ENCODE measurements at regions of chr10 and their contacts with region 1.

Region 1: DNA sequence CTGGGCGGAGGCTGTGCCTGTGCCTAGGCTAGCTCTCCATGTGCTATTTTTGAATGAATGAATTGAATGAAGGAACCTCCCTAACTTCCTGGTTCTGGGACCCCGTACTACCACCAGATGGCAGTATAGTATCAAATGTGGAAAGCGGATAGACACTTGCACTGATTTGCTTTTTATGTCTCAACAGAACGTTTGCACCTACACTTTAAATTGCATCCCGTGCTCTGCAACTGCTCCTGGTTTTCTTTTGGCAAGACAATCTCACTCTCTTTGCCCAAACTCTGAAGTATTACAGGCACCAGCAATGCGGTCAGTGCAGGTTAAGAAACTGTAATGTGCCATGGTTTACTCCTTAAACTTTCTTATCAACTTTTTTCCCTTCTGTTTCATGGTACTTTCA is 6.5 kb downstream of the FZD8 start:
- DNase-seq: no peak
- ATAC-seq: peak; percentile 60 to 83
- H3K4me3 ChIP-seq: no peak overlapping the region
- H3K27ac ChIP-seq: no peak overlapping the region
- H3K4me1 ChIP-seq: peaks cover 0 to 9% of the 10 kb centered on the region in 2 donors
- H3K27me3 ChIP-seq: no peaks in the 10 kb centered on the region
- CTCF ChIP-seq: peak; percentile 80 to 93 (median 84)
- POLR2A ChIP-seq: no peak

Region 2: GRCh38 chr10:36779234-36779846 is 1143.8 kb after region 1 on chr10:
- in situ Hi-C with region 1: loop called (anchors 5 to 10 kb)
- intact Hi-C with region 1: loop called (anchors 1 kb)
- DNase-seq: no peak
- ATAC-seq: peak in 1 of 2 donors; percentile 70
- H3K4me3 ChIP-seq: no peak overlapping the region
- H3K27ac ChIP-seq: no peak overlapping the region
- H3K4me1 ChIP-seq: no peaks in the 10 kb centered on the region
- H3K27me3 ChIP-seq: no peaks in the 10 kb centered on the region
- CTCF ChIP-seq: peak; percentile 27 to 62 (median 53)
- POLR2A ChIP-seq: no peak

Region 3: DNA sequence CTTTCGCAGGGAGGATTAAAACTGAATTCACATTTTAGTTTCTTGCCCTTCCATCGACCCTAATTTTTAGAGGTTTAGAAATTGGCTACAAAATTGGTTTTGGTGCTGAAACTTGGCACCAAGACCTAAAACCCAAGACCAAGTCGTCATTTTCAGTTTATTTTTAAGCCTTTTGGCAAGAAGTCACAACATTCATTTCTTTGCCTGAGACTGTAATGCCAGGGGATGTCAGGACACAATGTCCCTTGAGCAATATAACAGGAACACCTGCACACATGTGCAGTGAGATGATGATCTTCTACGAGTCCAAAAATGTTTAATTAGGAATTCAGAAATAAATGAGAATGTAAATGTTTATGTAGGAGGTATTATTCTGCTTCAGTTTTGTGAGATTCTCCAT is 1154.4 kb after region 1 on chr10:
- in situ Hi-C with region 1: loop called in 1 of 4 experiments (anchors 10 kb)
- intact Hi-C with region 1: no loop called
- DNase-seq: no peak
- ATAC-seq: no peak
- H3K4me3 ChIP-seq: no peak overlapping the region
- H3K27ac ChIP-seq: no peak overlapping the region
- H3K4me1 ChIP-seq: no peaks in the 10 kb centered on the region
- H3K27me3 ChIP-seq: no peaks in the 10 kb centered on the region
- CTCF ChIP-seq: no peak
- POLR2A ChIP-seq: no peak